ENCODE measurements at regions of chr18 and their contacts with region 1.

Region 1: DNA sequence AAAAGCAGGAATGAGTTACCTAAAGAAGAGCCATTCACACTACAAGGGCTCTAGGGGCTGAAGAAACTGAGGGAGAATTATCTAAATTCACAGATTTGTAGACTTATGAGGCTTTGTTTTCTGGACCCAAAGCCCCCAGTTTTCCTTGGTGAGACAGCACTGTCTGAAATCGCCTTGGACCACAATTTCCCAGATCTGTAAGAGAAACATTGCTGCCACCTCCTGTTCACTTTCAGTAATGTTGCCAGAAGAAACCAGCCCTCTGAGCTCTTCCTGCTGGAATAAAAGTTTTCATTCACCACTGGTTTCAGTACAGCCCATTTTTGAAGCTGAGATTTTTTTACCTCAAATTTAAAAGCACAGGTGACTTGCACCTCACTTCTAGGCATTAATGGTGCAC is 169.2 kb downstream of the CDH20 start:
- DNase-seq: peak in 38 of 42 donors; percentile 11 to 90 (median 67)

Region 2: GRCh38 chr18:60809937-60810336 is 692.5 kb before region 1 on chr18:
- intact Hi-C with region 1: loop called (anchors 10 kb)
- DNase-seq: no peak

Region 3: GRCh38 chr18:61322265-61322873 is 180.1 kb before region 1 on chr18:
- intact Hi-C with region 1: loop called (anchors 2 kb)
- DNase-seq: peak; percentile 60 to 96 (median 87)

Region 4: DNA sequence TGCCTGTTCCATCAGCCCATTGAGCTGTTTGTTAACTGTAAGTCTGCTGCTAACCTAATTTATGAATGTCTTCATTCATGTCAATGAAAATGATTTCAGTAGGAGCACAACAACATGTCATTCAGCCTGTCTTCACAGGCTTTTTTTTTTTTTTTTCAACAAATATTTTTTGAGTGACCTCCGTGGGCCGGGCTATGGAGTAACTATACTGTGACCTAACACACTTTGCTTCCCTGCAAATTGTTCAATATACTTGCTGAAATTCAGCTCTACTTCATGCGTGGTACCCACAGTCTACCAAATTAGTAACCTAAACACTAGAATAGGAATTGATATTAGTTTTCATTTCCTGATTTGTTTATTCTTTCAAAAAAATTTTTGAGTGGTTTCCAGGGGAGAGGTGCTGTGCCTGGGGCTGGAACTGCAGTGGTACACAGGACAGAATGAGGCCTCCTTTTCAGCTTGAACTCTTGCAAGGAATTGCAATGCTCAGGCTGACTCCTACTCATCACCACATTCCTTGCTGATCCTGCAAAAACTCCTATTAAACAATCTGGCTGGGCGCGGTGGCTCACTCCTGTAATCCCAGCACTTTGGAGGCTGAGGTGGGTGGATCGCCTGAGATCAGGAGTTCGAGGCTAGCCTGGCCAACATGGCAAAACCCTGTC is 82.1 kb before region 1 on chr18:
- intact Hi-C with region 1: no loop called
- DNase-seq: no peak

Region 5: DNA sequence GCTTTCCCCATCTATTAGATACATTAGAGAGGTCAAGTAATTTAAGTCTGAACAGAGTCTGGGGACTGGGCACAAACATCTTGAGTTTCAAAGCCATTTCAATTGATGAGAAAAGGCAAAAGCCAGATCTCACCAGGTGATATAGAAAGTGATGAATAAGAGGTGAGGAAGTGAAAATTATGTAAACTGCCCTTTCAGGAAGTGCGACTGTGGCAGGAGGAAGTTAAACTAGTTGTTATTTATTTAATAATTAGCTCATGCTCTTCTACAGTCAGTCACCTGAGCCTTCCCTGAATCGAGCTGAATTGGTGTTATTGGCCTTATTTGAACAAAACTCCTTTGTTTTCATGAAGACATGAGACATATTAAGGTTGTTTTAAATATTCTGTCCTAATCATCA is 54.2 kb before region 1 on chr18:
- intact Hi-C with region 1: no loop called
- DNase-seq: no peak